ENCODE measurements at regions of chr11 and their contacts with region 1.

Region 1: DNA sequence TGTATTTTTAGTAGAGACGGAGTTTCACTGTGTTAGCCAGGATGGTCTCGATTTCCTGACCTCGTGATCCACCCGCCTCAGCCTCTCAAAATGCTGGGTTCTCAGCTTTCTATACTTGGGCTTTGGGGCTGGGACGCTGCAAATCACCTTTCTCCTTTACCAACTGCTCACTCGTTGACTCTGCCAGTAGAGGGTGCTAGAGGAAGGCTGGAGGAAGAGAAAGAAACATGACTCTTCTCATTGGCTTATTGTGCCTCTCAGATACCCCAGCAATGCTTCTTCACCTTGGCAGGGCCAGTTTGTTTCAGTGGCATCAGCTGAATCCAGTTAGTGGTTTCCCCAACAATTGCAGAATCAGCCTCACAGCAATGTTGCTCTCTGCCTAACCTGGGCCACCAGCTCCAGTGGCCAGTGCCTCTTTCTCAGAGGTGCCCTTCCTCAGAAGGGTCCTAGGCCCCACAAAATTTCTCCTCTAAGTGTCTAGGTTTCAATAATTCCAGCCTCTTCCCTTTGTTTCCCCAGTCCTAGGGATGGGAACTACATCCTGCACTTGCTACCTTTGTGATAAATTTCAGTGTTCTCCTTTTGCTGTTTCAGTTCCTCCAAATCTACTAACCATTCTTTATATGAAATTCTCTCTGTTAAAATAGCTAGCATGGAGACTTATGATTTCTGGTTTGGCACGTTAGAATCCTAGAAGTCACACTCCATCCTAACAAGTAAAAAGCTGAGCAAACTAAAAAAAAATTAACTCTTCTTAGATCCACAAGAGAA is 71.5 kb upstream of the VSTM5 start:
- DNase-seq: peak; percentile 84
- H3K4me3 Mint-ChIP-seq: no peak overlapping the region
- H3K27ac Mint-ChIP-seq: no peak overlapping the region
- H3K4me1 Mint-ChIP-seq: no peaks in the 10 kb centered on the region
- H3K27me3 Mint-ChIP-seq: no peaks in the 10 kb centered on the region
- CTCF ChIP-seq: peak; percentile 78

Region 2: DNA sequence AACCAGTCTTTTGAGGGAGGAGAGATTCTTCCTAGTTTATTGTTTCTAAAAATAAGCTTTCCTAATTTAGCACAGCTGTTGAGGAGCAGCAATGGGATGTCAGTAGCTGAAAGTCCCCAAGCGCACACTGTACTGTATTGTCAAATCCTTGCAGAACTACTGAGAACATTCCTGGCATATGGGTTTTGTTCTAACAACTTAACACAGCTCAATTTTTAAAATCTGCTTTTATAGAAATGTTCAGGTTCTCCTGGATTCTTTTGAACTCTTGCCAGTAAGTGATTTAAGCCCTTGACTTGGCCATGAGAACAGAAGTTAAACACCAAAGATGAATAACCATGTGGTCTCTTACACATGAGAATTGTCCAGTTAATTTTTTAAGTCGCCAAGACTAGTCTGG is 1478.7 kb before region 1 on chr11:
- CTCF ChIA-PET with region 1: no interaction called
- POLR2A ChIA-PET with region 1: no interaction called
- intact Hi-C with region 1: no loop called
- DNase-seq: no peak
- H3K4me3 Mint-ChIP-seq: no peak overlapping the region
- H3K27ac Mint-ChIP-seq: no peak overlapping the region
- H3K4me1 Mint-ChIP-seq: peaks cover 9% of the 10 kb centered on the region
- H3K27me3 Mint-ChIP-seq: no peaks in the 10 kb centered on the region
- CTCF ChIP-seq: no peak

Region 3: DNA sequence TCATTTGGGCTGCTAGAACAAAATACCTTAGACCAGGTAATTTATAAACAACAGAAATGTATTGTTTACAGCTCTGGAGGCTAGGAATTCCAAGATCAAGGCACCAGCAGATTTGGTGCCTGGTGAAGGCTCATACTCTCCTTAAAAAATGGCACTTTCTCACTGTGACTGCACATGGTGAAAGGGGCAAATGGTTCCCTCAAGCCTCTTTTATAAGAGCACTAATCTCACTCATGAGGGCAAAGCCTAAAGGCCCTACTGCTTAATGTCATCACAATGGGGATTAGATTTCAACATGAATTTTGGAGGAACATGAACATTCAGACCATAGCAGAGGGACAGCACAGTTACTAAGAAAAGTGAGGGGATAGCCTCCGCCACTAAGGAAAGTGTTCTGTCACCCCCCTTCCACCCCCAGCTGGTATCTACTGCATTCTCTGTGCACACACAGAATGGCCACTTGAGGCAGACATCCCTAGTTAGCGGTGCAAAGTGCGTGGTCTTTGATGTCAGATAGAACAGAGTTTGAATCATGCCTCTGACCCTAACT is 307.6 kb before region 1 on chr11:
- CTCF ChIA-PET with region 1: no interaction called
- POLR2A ChIA-PET with region 1: no interaction called
- intact Hi-C with region 1: no loop called
- DNase-seq: peak; percentile 14
- H3K4me3 Mint-ChIP-seq: no peak overlapping the region
- H3K27ac Mint-ChIP-seq: no peak overlapping the region
- H3K4me1 Mint-ChIP-seq: no peaks in the 10 kb centered on the region
- H3K27me3 Mint-ChIP-seq: no peaks in the 10 kb centered on the region
- CTCF ChIP-seq: no peak

Region 4: DNA sequence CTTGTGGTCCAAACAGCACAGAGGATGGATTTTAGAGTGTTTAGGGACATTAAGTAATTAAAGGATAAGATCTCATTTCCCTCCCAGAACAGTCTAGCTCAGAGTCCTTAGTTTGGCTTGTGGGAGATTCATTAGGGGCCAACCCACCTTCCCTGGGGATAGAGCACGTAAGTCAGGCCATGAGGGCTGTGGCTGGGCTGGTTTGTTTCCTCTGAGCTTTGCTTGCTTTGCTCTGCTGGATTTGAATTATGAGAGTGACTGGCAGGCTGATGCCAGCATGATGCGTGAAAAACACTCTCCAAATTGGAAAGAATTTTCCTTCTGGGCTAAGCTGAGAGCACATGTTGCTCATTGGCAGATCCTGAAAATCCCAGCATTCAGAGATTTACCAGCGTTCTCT is 14.6 kb after region 1 on chr11:
- CTCF ChIA-PET with region 1: interaction called, 12 read pairs
- POLR2A ChIA-PET with region 1: no interaction called
- intact Hi-C with region 1: no loop called
- DNase-seq: no peak
- H3K4me3 Mint-ChIP-seq: no peak overlapping the region
- H3K27ac Mint-ChIP-seq: no peak overlapping the region
- H3K4me1 Mint-ChIP-seq: peaks cover 23% of the 10 kb centered on the region
- H3K27me3 Mint-ChIP-seq: peaks cover 14% of the 10 kb centered on the region
- CTCF ChIP-seq: no peak

Region 5: GRCh38 chr11:94112206-94112953 is 190.5 kb after region 1 on chr11:
- CTCF ChIA-PET with region 1: interaction called, 12 read pairs
- POLR2A ChIA-PET with region 1: no interaction called
- intact Hi-C with region 1: loop called (anchors 1 kb)
- DNase-seq: peak; percentile 40
- H3K4me3 Mint-ChIP-seq: no peak overlapping the region
- H3K27ac Mint-ChIP-seq: peak overlapping the region; percentile 57
- H3K4me1 Mint-ChIP-seq: peaks cover 33% of the 10 kb centered on the region
- H3K27me3 Mint-ChIP-seq: no peaks in the 10 kb centered on the region
- CTCF ChIP-seq: no peak

Region 6: DNA sequence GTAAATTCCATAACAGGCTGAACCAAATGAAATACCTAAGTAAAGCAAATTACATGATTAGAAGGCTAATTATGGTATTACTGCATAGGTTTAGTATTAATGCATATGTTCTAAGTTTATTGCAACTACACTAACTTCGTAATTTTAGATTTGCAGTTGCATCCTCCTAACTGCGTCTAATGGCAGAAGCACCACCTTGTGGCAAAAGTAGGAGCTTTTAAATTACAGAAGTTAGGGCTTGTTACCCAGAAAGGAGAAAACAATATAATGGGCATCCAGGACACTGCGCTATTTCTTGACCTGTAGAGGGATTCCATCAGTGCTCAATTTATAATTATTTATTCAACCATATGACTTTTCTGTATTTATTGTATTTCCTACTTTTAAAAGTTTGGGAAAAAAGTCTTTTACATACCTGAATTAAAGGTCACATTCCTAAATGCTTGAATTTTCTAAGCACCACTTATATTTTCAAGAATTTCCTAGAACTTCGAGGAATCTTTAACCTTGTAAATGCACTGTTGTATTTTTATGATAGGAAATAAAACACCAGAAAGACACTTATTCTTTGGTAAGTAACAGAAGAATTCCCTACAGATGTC is 495.6 kb after region 1 on chr11:
- CTCF ChIA-PET with region 1: interaction called, 7 read pairs
- POLR2A ChIA-PET with region 1: interaction called, 3 read pairs
- intact Hi-C with region 1: loop called (anchors 1 kb)
- DNase-seq: peak; percentile 44
- H3K4me3 Mint-ChIP-seq: no peak overlapping the region
- H3K27ac Mint-ChIP-seq: no peak overlapping the region
- H3K4me1 Mint-ChIP-seq: no peaks in the 10 kb centered on the region
- H3K27me3 Mint-ChIP-seq: no peaks in the 10 kb centered on the region
- CTCF ChIP-seq: peak; percentile 47